Cardiac septum (tissue), 1 donor: ENCODE measurements at regions of chr4 and their contacts with region 1.

Region 1: DNA sequence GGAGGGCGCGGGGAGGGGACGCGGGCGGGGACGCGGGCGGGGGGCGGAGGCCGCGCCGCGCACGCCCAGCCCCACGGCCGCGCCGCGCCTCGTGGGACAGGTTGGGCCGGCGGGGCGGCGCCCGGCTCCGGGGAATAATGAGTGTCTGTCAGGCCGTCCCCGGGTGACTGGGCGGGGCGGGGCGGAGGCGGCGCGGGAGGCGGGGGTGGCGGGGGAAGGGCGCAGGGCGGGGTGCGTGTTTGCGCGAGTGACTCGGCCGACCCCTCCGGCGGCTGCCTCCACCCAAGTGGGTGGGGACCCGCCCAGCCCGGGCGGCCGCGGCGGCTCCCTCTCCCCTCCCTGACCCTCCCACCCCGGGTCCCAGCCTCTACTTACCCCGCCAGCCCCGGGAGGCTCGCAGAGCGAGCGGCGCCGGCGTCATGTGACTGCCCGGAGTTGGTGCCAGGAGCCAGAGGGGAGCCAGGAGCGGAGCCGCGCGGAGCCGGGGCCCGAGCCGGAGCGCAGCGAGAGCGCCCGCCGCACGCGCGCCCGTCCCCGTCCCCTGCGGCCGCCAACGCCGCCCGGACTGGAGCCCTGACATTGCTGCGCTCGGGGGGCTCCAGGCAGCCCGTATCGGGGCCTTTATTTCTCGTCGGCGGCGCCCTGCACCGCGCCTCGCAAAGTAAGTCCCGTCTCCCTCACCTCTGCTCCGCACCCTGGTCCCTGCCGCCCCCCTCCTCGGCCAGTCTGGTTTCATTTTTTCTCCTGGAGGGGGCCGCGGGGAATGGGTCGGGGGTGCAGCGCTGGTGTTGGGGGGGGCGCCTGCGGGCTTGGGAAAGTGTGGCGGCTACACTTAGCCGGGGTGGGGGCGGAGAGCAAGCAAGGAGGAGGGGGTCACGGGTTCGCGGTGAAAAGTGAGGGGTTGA is at the start of gene KLF3:
- DNase-seq: peak; percentile 98
- total RNA-seq, gene KLF3: 25.3 TPM

Region 2: DNA sequence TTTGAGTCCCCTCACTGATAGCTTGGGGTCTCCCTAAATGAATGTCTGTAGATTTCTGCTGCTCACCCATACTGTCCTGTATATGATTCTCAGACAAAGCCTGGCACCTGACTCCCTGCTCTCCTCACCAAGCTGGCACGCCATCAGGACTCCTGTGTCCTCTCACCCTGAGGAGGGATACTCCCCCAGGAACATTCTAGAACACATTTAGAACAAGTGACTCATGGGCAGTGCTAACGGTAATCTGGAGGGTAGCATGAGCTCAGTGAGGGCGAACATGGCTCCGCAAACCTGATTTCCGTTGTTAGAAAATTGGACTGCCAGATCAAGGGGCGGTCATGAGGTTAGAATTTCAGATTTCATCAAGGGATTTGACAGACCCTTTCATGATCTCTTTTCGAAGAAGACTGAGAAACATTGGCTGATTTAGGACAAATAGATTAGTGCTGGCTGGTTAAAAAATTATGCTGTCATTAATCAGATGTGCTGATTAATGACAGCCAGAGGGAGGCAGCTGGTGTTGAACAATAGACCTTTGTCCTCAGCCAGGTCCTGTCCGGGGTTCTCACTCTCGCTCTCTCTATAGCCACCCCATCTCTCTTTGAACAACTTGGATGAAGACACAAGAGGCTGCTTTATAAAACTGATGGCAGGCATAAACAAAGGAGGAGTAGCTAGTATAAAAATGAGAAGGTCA is 459.6 kb before region 1 on chr4:
- intact Hi-C with region 1: no loop called
- DNase-seq: no peak

Region 3: GRCh38 chr4:38387348-38387747 is 276.7 kb before region 1 on chr4:
- intact Hi-C with region 1: loop called (anchors 5 kb)
- DNase-seq: no peak

Region 4: DNA sequence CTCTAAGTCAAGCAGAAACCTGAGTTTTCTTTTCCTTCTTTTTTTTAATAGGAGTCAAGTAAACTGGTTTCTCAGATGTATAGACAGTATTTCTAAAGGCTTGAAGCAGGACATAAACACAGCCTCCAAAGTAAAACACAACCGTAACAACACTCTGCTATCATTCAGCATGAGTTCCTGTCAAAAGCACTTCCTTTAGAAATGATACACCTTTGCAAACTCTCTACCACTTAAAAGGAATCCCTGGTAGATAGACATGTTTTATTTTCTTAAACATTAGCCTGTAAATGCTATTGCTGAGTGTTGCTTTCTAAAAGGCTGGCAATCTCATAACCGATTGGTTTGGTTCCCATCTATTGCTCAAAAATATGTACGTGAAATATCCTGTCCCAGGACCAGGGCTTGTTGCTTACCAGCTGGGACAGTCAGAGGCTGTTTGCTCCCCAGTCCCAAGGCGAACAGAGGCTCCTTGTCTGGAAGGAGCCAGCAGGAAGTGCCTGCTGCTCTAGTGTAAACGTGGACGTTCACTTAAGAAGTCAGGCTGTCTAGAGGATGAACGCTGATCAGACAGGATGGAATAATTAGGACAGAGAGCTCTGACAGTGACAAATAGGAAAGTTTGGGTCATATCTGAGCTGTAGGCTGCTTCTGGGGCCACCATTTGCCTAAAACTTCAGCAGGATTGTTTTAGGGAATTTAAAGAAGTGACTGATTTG is 174.0 kb before region 1 on chr4:
- intact Hi-C with region 1: loop called (anchors 5 kb)
- DNase-seq: no peak

Region 5: DNA sequence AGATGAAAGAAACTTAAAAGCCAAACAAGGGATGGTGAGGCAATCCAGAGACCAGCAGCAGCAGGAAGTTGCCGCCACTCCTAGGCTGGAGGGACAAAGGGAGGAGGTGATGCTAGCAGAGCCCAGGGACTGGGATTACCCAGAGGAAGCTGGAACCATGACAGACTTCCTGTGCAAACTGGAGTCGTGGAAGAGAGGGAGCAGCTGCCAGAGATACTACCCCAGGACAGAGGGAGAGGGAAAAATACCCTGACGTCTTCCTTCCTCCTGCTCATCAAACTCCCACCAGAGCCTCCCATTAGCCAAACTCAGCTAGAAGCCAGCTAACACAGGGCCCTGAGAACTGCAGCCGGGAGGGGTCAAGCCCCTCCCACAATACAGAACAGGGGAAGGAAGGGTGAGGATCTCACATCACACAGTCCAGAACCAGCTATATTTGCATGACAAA is 101.3 kb before region 1 on chr4:
- intact Hi-C with region 1: loop called (anchors 1 kb)
- DNase-seq: peak; percentile 79

Region 6: DNA sequence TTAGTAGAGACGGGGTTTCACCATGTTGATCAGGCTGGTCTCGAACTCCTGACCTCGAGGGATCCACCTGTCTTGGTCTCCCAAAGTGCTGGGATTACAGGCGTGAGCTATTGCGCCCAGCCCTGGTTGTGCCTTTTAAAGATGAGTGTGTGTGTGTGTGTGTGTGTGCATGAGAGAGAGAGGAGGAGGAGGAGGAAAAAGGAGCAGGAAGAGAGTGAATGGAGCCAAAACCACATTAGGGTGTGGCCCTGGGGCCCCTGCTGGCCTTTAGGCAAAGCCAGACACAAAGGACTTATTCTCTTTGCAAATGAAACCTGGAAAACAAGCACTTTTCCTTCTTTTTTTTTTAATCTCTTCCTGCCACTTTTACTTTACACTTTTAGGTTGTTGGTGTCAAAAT is 48.2 kb before region 1 on chr4:
- intact Hi-C with region 1: loop called (anchors 5 kb)
- DNase-seq: no peak

Region 7: DNA sequence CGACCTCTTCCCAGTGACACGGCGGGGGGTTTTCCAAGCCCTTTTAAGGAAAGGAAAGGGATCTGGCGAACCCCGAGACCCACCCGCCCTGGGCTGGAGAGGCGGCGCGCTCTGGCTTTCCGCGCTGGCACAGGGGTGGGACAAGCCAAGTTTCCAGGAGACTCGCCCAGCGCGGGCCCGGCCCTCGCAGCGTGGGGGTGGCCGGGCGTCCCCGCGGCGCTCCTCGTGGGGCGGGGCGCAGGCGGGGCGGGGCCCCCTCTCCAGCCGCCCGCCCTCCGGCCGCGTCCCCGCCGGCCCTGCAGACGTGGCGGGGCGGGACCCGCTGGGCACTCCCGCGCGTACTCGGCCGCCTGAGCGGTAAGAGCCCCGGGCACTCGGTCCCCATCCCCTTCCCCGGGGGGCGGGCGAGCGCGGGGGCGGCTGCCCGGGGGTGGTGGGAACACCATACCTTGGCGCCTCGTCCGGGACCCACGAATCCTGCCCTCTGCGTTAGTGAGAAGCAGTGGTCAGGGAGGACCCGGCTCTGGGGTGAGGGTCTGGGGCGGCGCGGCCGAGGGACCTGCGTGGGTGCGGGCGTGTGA is 203.5 kb after region 1 on chr4 and contains the start of gene FAM114A1:
- intact Hi-C with region 1: loop called (anchors 5 kb)
- DNase-seq: peak; percentile 90
- total RNA-seq, gene FAM114A1: 26.1 TPM